GM12878 (cell line): ENCODE measurements at regions of chr10 and their contacts with region 1.

Region 1: GRCh38 chr10:36872702-36873393 is 252.6 kb upstream of the ANKRD30A start:
- DNase-seq: no peak
- ATAC-seq: peak; percentile 62
- H3K4me3 ChIP-seq: no peak overlapping the region
- H3K27ac ChIP-seq: no peak overlapping the region
- H3K4me1 ChIP-seq: no peaks in the 10 kb centered on the region
- H3K27me3 ChIP-seq: no peaks in the 10 kb centered on the region
- CTCF ChIP-seq: no peak
- EP300 ChIP-seq: no peak
- POLR2A ChIP-seq: no peak
- RAD21 ChIP-seq: no peak

Region 2: DNA sequence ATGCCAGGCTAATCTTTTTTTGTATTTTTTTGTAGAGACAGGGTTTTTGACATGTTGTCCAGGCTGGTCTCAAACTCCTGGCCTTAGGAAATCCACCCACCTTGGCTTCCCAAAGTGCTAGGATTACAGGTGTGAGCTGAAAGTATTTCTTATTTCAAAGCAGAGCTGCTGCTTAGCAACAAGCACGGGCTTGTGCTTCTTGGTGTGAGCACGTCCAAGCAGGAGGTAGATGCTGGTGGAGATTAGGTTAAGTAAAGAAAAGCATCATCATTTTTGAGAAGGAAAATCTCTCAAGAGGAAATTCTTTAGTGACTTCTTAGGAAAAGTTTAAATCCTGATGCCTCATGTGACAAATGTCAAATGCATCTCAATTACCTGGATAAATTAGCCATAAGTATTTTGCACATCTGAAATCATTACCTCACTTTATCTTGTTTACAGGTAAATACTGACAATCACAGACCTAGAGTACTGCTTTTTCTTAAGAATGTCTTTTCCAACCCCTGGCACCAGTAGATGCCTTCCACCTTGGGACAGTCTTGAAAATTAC is 799.0 kb before region 1 on chr10:
- CTCF ChIA-PET with region 1: no interaction called
- POLR2A ChIA-PET with region 1: no interaction called
- RAD21 ChIA-PET with region 1: no interaction called
- SMC1A ChIA-PET with region 1: no interaction called
- in situ Hi-C with region 1: no loop called
- intact Hi-C with region 1: no loop called
- DNase-seq: no peak
- ATAC-seq: no peak
- H3K4me3 ChIP-seq: no peak overlapping the region
- H3K27ac ChIP-seq: no peak overlapping the region
- H3K4me1 ChIP-seq: no peaks in the 10 kb centered on the region
- H3K27me3 ChIP-seq: no peaks in the 10 kb centered on the region
- CTCF ChIP-seq: no peak
- EP300 ChIP-seq: no peak
- POLR2A ChIP-seq: no peak
- RAD21 ChIP-seq: no peak

Region 3: DNA sequence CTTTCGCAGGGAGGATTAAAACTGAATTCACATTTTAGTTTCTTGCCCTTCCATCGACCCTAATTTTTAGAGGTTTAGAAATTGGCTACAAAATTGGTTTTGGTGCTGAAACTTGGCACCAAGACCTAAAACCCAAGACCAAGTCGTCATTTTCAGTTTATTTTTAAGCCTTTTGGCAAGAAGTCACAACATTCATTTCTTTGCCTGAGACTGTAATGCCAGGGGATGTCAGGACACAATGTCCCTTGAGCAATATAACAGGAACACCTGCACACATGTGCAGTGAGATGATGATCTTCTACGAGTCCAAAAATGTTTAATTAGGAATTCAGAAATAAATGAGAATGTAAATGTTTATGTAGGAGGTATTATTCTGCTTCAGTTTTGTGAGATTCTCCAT is 82.9 kb before region 1 on chr10:
- CTCF ChIA-PET with region 1: no interaction called
- POLR2A ChIA-PET with region 1: no interaction called
- RAD21 ChIA-PET with region 1: no interaction called
- SMC1A ChIA-PET with region 1: no interaction called
- in situ Hi-C with region 1: no loop called
- intact Hi-C with region 1: loop called (anchors 10 kb)
- DNase-seq: no peak
- ATAC-seq: no peak
- H3K4me3 ChIP-seq: no peak overlapping the region
- H3K27ac ChIP-seq: no peak overlapping the region
- H3K4me1 ChIP-seq: no peaks in the 10 kb centered on the region
- H3K27me3 ChIP-seq: no peaks in the 10 kb centered on the region
- CTCF ChIP-seq: no peak
- EP300 ChIP-seq: no peak
- POLR2A ChIP-seq: no peak
- RAD21 ChIP-seq: no peak

Region 4: DNA sequence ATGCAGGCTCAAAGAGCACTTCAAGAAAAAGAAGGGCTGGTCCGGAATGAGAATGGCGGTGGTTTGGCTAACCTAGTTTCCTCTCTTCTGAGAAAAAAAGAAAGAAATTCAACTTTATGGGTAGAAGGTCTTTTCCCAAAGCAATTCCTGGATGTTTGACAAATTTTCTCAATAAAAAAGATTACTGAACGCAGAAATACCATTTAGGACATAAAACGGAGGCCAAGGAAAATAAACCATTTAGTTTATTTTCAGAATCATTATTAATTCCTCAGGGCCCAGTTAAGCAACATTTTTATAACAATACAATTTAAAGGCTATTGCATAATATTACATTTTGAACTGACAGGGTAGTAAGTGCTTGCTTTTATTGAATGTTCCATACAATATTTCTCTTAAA is 32.1 kb before region 1 on chr10:
- CTCF ChIA-PET with region 1: no interaction called
- POLR2A ChIA-PET with region 1: no interaction called
- RAD21 ChIA-PET with region 1: no interaction called
- SMC1A ChIA-PET with region 1: no interaction called
- in situ Hi-C with region 1: no loop called
- intact Hi-C with region 1: no loop called
- DNase-seq: no peak
- ATAC-seq: no peak
- H3K4me3 ChIP-seq: no peak overlapping the region
- H3K27ac ChIP-seq: no peak overlapping the region
- H3K4me1 ChIP-seq: no peaks in the 10 kb centered on the region
- H3K27me3 ChIP-seq: no peaks in the 10 kb centered on the region
- CTCF ChIP-seq: no peak
- EP300 ChIP-seq: no peak
- POLR2A ChIP-seq: no peak
- RAD21 ChIP-seq: no peak